Common myeloid progenitor, CD34-positive (primary cell): ENCODE measurements at regions of chr10 and their contacts with region 1.

Region 1: DNA sequence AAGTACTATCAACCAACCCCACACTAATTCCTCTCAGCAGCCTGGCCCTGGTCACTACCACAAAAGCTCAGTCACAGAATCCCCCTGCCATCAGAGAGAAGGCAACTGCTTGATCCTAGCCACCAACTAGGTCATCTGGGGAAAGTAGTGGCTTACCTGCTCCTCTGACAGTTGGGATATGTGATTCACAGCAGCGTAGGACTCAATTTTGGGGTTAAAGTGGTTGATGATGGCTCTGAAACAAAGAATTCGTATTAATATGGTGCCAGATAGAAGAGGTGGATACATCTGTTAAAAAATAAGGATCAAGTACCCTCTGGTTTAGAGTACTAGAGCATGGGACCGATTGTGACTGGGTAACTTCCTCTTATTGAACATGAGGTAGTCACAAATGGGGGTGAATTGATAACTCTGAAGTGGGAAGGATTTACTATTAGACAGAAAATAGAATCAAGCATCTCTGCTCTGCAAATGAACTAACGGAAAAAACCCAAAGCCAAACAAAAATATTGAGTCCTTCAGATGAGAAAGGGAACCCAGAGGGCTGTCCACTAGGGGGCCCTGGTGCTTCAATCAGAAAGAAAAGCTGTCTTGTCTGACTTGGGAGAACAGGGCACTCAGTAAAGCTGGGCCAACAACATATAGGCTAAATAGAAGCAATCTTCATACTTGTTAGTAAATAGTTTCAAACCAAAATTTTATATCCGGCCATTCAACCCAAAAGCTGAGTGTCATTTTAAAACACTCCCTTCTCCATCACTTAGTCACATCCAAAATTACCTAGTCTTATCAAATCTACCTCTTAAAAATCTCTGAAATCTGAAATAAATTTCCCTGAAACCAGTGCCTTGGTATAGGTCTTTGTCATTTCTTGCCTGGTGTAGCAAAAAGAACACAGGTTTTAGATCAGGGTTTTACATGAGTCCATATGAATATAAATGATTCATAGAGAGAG is 45.9 kb upstream of the KCNIP2 start:
- DNase-seq: peak; percentile 59 to 77 (median 71)
- H3K4me3 ChIP-seq: no peak overlapping the region
- H3K27ac ChIP-seq: no peak overlapping the region
- H3K4me1 ChIP-seq: no peaks in the 10 kb centered on the region
- H3K27me3 ChIP-seq: no peaks in the 10 kb centered on the region

Region 2: DNA sequence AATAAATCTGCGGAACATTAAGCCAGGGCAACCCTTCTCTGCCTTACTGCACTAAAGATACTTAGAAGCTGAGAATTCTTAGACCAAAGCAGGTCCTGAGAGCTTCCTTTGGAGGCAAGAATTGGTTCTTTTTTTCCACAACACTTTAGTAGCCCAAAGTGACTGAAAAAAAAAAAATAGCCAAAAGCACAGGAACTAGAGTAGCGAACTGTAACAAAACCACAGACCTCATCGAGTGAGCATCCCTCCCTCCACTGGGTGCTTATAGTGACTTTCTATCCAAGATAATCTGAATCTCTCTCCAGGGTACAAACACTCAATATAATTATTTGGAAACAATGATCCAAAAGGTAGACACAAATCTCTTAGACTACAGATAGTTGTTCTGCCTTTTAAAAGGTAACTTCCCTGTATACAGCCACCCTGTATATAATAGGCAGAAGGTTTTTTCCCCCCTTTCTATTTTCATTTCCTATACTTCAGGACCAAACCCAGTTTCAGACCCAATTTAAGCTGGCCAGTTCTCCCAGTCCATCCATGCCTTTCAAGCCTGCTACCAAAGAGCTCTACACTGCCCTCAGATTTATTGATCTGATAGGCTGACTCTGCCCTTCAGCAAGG is 14.4 kb before region 1 on chr10:
- CTCF ChIA-PET with region 1: interaction called, 17 read pairs
- POLR2A ChIA-PET with region 1: no interaction called
- DNase-seq: peak; percentile 4 to 36 (median 35)
- H3K4me3 ChIP-seq: no peak overlapping the region
- H3K27ac ChIP-seq: no peak overlapping the region
- H3K4me1 ChIP-seq: peaks cover 0 to 11% (median 9%) of the 10 kb centered on the region in 4 experiments
- H3K27me3 ChIP-seq: no peaks in the 10 kb centered on the region